Activated CD8-positive, alpha-beta T cell treated with anti-CD3 and anti-CD28 coated beads for 36 hours (primary cell): ENCODE measurements at regions of chr16 and their contacts with region 1.

Region 1: DNA sequence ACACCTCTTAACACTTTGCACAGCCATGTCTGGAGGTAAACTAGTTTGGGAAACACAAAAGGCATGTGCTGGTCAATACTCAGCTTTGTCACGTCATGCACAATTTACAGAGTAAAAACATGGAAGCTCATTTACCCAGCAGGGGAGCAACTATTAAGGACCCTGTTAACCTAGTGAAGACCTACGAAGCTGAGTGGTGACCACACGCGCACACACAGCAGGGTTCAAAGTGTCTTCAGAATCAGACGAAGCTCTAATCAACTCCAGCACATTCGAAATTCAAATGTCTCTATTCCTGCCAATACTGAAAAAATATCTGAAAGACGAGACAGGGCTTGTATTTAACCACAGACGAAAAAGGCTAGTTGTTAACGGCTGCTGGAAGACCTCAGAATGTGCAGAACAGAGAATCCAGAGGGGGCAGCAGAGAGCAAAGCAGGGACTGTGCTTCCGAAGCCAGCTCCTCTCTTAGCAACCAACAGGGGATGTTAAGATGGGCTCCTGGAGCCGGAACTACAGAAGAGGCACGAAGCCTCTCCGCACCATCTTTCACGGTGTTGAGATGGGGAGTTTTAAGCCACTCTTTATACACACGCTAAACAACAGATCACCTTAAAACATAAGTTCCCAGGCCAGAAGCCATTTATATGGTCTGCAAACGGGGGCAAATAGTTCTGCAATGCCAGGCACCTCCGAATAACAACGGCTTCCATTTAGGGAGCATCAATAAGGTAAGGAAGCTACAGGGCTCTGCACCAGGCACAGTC is 45.7 kb downstream of the CMTM4 start:
- DNase-seq: peak; percentile 90
- ATAC-seq: peak; percentile 100
- H3K4me3 Mint-ChIP-seq: peak overlapping the region; percentile 15
- H3K27ac Mint-ChIP-seq: no peak overlapping the region
- H3K4me1 Mint-ChIP-seq: peaks cover 16% of the 10 kb centered on the region
- H3K27me3 Mint-ChIP-seq: no peaks in the 10 kb centered on the region
- CTCF ChIP-seq: peak; percentile 96

Region 2: GRCh38 chr16:66562407-66562806 is 88.5 kb before region 1 on chr16:
- CTCF ChIA-PET with region 1: interaction called, 15 read pairs
- POLR2A ChIA-PET with region 1: no interaction called
- intact Hi-C with region 1: no loop called
- DNase-seq: no peak
- ATAC-seq: no peak
- H3K4me3 Mint-ChIP-seq: no peak overlapping the region
- H3K27ac Mint-ChIP-seq: peak overlapping the region; percentile 64
- H3K4me1 Mint-ChIP-seq: peaks cover 56% of the 10 kb centered on the region
- H3K27me3 Mint-ChIP-seq: no peaks in the 10 kb centered on the region
- CTCF ChIP-seq: peak; percentile 44

Region 3: GRCh38 chr16:66618588-66619375 is 32.1 kb before region 1 on chr16:
- CTCF ChIA-PET with region 1: interaction called, 21 read pairs
- POLR2A ChIA-PET with region 1: no interaction called
- intact Hi-C with region 1: no loop called
- DNase-seq: no peak
- ATAC-seq: peak; percentile 37
- H3K4me3 Mint-ChIP-seq: no peak overlapping the region
- H3K27ac Mint-ChIP-seq: no peak overlapping the region
- H3K4me1 Mint-ChIP-seq: peaks cover 7% of the 10 kb centered on the region
- H3K27me3 Mint-ChIP-seq: no peaks in the 10 kb centered on the region
- CTCF ChIP-seq: no peak

Region 4: GRCh38 chr16:66639091-66639885 is 11.6 kb before region 1 on chr16:
- CTCF ChIA-PET with region 1: interaction called, 48 read pairs
- POLR2A ChIA-PET with region 1: no interaction called
- intact Hi-C with region 1: no loop called
- DNase-seq: no peak
- ATAC-seq: no peak
- H3K4me3 Mint-ChIP-seq: no peak overlapping the region
- H3K27ac Mint-ChIP-seq: no peak overlapping the region
- H3K4me1 Mint-ChIP-seq: no peaks in the 10 kb centered on the region
- H3K27me3 Mint-ChIP-seq: peaks cover 2% of the 10 kb centered on the region
- CTCF ChIP-seq: no peak

Region 5: GRCh38 chr16:66667944-66668343 is 17.1 kb after region 1 on chr16:
- CTCF ChIA-PET with region 1: interaction called, 72 read pairs
- POLR2A ChIA-PET with region 1: no interaction called
- intact Hi-C with region 1: no loop called
- DNase-seq: no peak
- ATAC-seq: no peak
- H3K4me3 Mint-ChIP-seq: no peak overlapping the region
- H3K27ac Mint-ChIP-seq: no peak overlapping the region
- H3K4me1 Mint-ChIP-seq: no peaks in the 10 kb centered on the region
- H3K27me3 Mint-ChIP-seq: no peaks in the 10 kb centered on the region
- CTCF ChIP-seq: no peak

Region 6: GRCh38 chr16:66696669-66697630 is 46.1 kb after region 1 on chr16 and contains the start of gene CMTM4:
- CTCF ChIA-PET with region 1: interaction called, 16 read pairs
- POLR2A ChIA-PET with region 1: no interaction called
- intact Hi-C with region 1: no loop called
- DNase-seq: peak; percentile 70
- ATAC-seq: peak; percentile 97
- H3K4me3 Mint-ChIP-seq: peak within 1 kb of the TSS; percentile 74
- H3K27ac Mint-ChIP-seq: no peak within 1 kb of the TSS
- H3K4me1 Mint-ChIP-seq: peaks cover 12% of the 10 kb centered on the region
- H3K27me3 Mint-ChIP-seq: peaks cover 13% of the 10 kb centered on the region
- CTCF ChIP-seq: peak; percentile 29
- total RNA-seq, gene CMTM4: 3.2 to 3.5 TPM

Region 7: DNA sequence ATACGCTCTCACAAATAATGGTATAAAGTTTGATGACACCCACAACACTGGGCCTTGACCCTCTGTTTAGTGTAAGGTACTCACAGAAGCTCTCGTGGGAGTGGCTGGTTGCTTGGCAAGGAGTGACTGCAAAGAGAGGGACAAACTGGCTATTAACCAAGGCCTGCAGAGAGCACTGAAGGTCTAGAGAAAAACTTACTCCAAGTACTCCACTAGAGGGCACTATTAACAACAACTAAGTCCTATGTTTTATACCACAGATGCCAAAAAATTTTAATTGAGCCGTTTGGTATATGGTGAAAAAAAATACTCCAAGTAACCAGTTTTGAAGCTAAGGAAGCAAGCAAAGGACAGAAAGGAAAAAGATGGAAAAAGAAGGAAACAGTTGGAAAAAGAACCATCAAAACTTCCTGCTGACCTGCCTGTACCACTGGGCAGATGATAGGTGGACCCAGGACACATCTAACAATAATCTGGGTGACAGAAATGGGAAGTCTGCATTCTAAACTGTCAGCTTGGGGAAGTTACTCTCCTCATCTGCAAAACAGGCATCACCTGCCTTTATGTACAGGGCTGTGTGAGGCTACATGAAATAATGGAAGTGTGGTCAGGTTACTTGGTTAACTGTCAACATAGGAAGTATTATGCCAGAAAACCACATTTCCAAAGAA is 77.4 kb after region 1 on chr16:
- CTCF ChIA-PET with region 1: interaction called, 14 read pairs
- POLR2A ChIA-PET with region 1: no interaction called
- intact Hi-C with region 1: no loop called
- DNase-seq: no peak
- ATAC-seq: peak; percentile 80
- H3K4me3 Mint-ChIP-seq: no peak overlapping the region
- H3K27ac Mint-ChIP-seq: peak overlapping the region; percentile 65
- H3K4me1 Mint-ChIP-seq: peaks cover 4% of the 10 kb centered on the region
- H3K27me3 Mint-ChIP-seq: no peaks in the 10 kb centered on the region
- CTCF ChIP-seq: peak; percentile 72

Region 8: GRCh38 chr16:67084345-67085028 is 433.6 kb after region 1 on chr16:
- CTCF ChIA-PET with region 1: no interaction called
- POLR2A ChIA-PET with region 1: no interaction called
- intact Hi-C with region 1: no loop called
- DNase-seq: no peak
- ATAC-seq: no peak
- H3K4me3 Mint-ChIP-seq: no peak overlapping the region
- H3K27ac Mint-ChIP-seq: no peak overlapping the region
- H3K4me1 Mint-ChIP-seq: peaks cover 5% of the 10 kb centered on the region
- H3K27me3 Mint-ChIP-seq: no peaks in the 10 kb centered on the region
- CTCF ChIP-seq: no peak